A673 (cell line): ENCODE measurements at regions of chr19 and their contacts with region 1.

Region 1: GRCh38 chr19:34712395-34713261 is 21.4 kb upstream of the ZNF181 start:
- DNase-seq: peak; percentile 85
- H3K4me3 ChIP-seq: no peak overlapping the region
- H3K27ac ChIP-seq: no peak overlapping the region
- H3K4me1 ChIP-seq: no peaks in the 10 kb centered on the region
- H3K27me3 ChIP-seq: no peaks in the 10 kb centered on the region
- CTCF ChIP-seq: peak; percentile 67

Region 2: DNA sequence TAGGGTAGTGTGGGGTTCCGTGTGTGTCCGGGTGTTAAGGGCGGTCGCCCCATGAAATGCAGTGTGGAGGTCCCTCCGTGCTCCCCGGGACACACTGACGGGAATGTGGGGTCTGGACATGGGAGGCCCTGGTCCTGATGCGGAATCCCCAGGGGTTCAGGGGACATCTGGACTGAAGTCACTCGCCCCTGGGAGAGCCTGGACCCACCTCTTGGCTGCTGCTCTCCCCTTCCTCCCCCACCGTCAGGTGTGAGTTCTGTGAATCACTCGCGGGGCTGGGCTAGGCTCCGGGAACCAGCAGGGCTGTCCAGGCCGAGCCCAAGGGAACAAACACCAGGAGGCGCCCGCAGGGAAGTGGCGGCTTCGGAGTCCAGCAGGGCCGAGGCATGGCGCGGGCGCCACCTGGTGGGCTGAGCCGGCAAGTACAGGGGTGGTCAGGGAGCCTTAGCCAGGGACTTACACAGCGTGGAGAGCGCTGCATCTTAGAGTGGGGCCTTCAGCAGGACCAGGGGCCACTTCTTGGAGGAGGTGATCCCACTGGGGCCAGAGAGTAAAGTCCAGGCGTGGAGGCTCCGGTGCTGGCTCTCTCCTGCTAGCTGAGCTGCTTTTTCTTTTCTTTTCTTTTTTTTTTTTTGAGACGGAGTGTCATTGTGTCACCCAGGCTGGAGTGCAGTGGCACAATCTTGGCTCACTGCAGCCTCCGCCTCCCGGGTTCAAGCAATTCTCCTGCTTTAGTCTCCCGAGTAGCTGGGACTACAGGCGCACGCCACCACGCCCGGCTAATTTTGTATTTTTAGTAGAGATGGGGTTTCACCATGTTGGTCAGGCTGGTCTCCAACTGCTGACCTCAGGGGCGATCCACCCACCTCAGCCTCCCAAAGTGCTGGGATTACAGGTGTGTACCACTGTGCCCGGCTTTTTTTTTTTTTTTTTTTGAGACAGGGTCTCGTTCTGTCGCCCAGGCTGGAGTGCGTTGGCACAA is 211.0 kb before region 1 on chr19:
- CTCF ChIA-PET with region 1: no interaction called
- POLR2A ChIA-PET with region 1: no interaction called
- intact Hi-C with region 1: loop called (anchors 1 kb)
- DNase-seq: peak; percentile 92
- H3K4me3 ChIP-seq: no peak overlapping the region
- H3K27ac ChIP-seq: no peak overlapping the region
- H3K4me1 ChIP-seq: no peaks in the 10 kb centered on the region
- H3K27me3 ChIP-seq: no peaks in the 10 kb centered on the region
- CTCF ChIP-seq: peak; percentile 100

Region 3: DNA sequence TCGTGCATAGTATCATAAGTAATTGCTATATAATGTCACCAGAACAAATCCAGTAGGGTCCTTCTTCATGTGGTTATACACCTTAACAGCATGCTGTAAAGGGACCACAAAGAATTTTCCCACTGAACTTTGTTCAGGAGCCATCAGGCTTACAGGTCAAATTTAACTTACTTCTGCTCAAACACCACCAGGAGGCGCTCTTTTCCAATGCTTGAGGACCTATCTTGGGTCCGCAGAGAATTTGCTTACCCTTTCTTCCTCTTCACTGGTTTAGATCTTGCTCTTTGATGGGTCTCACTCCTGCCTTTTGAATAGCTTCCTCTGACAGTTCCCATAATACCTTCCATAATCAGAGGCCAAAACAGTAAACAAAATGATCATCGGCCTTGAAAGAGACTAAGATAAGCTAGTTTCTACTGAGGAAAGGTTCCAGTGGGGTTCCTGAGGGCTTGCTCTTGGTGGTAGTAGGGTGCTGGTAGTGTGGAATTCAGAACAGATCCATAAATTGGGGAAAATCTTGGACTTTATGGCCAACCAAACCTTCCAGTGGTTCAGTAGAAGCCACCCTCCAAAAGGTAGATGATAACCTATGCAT is 73.0 kb before region 1 on chr19:
- CTCF ChIA-PET with region 1: no interaction called
- POLR2A ChIA-PET with region 1: no interaction called
- intact Hi-C with region 1: loop called (anchors 1 kb)
- DNase-seq: peak; percentile 87
- H3K4me3 ChIP-seq: no peak overlapping the region
- H3K27ac ChIP-seq: no peak overlapping the region
- H3K4me1 ChIP-seq: no peaks in the 10 kb centered on the region
- H3K27me3 ChIP-seq: peaks cover 3% of the 10 kb centered on the region
- CTCF ChIP-seq: peak; percentile 85

Region 4: GRCh38 chr19:34938886-34939285 is 226.3 kb after region 1 on chr19:
- CTCF ChIA-PET with region 1: no interaction called
- POLR2A ChIA-PET with region 1: no interaction called
- intact Hi-C with region 1: no loop called
- DNase-seq: no peak
- H3K4me3 ChIP-seq: no peak overlapping the region
- H3K27ac ChIP-seq: no peak overlapping the region
- H3K4me1 ChIP-seq: no peaks in the 10 kb centered on the region
- H3K27me3 ChIP-seq: no peaks in the 10 kb centered on the region
- CTCF ChIP-seq: no peak